Mammary epithelial cell (primary cell): ENCODE measurements at regions of chr11 and their contacts with region 1.

Region 1: GRCh38 chr11:60700689-60701480 is 1.5 kb downstream of the MS4A8 start:
- DNase-seq: no peak
- H3K4me3 ChIP-seq: no peak overlapping the region
- H3K27ac ChIP-seq: no peak overlapping the region
- H3K4me1 ChIP-seq: no peaks in the 10 kb centered on the region
- H3K27me3 ChIP-seq: no peaks in the 10 kb centered on the region
- CTCF ChIP-seq: peak; percentile 28 to 34

Region 2: GRCh38 chr11:60756307-60757032 is 55.6 kb after region 1 on chr11 and contains the start of gene MS4A15:
- CTCF ChIA-PET with region 1: no interaction called
- dilution Hi-C with region 1: no loop called
- in situ Hi-C with region 1: no loop called
- intact Hi-C with region 1: loop called (anchors 2 kb)
- DNase-seq: peak; percentile 36
- H3K4me3 ChIP-seq: no peak within 1 kb of the TSS
- H3K27ac ChIP-seq: no peak within 1 kb of the TSS
- H3K4me1 ChIP-seq: no peaks in the 10 kb centered on the region
- H3K27me3 ChIP-seq: no peaks in the 10 kb centered on the region
- CTCF ChIP-seq: peak; percentile 34 to 43
- total RNA-seq, gene MS4A15: not detected